Colonic mucosa (tissue), 4 donors: ENCODE measurements at regions of chr3 and their contacts with region 1.

Region 1: GRCh38 chr3:11060500-11061251 is 68.1 kb downstream of the SLC6A1 start:
- DNase-seq: peak; percentile 41
- H3K4me3 ChIP-seq: no peak overlapping the region
- H3K27ac ChIP-seq: no peak overlapping the region
- H3K4me1 ChIP-seq: no peaks in the 10 kb centered on the region
- H3K27me3 ChIP-seq: peaks cover 5% of the 10 kb centered on the region
- CTCF ChIP-seq: peak; percentile 86

Region 2: GRCh38 chr3:10764259-10765051 is 296.2 kb before region 1 on chr3:
- intact Hi-C with region 1: loop called (anchors 5 kb)
- DNase-seq: no peak
- H3K4me3 ChIP-seq: no peak overlapping the region
- H3K27ac ChIP-seq: no peak overlapping the region
- H3K4me1 ChIP-seq: no peaks in the 10 kb centered on the region
- H3K27me3 ChIP-seq: peaks cover 2% of the 10 kb centered on the region
- CTCF ChIP-seq: no peak

Region 3: GRCh38 chr3:10945683-10946287 is 114.9 kb before region 1 on chr3:
- intact Hi-C with region 1: loop called (anchors 2 kb)
- DNase-seq: peak; percentile 40
- H3K4me3 ChIP-seq: no peak overlapping the region
- H3K27ac ChIP-seq: no peak overlapping the region
- H3K4me1 ChIP-seq: no peaks in the 10 kb centered on the region
- H3K27me3 ChIP-seq: no peaks in the 10 kb centered on the region
- CTCF ChIP-seq: peak; percentile 81

Region 4: DNA sequence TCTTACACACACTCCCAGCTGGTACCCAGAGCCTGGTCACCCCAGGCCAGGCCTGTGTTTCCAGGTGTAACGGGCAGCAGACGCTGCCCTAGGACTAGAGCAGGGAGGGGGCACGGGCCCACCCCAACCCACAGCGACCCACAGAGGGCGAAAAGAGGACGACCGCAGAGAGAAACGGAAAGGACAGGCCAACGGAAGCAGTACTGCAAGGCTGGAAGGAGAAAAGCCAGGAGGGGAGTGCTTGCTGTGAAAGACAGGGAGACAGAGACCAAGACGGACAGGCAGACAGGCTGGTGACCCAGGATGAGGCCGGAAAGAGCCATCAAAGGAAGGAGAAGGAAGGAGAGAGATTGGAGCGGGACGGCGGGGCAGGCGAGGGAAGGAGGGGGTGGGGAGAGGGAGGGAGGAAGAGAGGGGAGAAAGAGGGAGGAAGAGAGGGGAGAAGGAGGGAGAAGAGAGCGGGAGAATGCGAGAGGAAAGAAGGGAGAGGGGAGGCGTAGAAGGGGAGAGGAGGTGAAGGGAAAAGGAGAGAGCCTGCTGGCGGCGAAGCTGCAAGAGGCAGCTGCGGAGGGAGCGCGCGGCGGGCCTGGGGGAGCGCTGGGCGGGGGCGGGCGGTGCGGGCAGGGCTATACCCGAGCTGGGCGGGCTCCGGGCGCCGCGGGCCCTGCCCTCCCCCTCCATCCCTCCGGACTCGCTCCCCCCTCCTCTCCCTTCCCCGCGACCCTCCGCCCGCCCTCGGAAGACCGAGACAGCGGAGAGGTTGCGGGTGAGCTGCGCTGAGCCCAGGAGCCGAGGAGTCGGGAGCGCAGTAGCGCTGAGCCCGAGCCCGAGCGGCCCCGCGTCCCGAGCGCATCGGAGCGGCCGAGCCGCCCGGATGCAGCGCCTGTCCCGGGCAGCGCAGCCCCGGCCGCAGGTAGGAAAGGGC is 68.4 kb before region 1 on chr3 and contains the start of gene SLC6A1:
- intact Hi-C with region 1: no loop called
- DNase-seq: no peak
- H3K4me3 ChIP-seq: no peak within 1 kb of the TSS
- H3K27ac ChIP-seq: no peak within 1 kb of the TSS
- H3K4me1 ChIP-seq: no peaks in the 10 kb centered on the region
- H3K27me3 ChIP-seq: peaks cover 24% of the 10 kb centered on the region
- CTCF ChIP-seq: no peak
- total RNA-seq, gene SLC6A1: 0.05 to 0.21 TPM

Region 5: DNA sequence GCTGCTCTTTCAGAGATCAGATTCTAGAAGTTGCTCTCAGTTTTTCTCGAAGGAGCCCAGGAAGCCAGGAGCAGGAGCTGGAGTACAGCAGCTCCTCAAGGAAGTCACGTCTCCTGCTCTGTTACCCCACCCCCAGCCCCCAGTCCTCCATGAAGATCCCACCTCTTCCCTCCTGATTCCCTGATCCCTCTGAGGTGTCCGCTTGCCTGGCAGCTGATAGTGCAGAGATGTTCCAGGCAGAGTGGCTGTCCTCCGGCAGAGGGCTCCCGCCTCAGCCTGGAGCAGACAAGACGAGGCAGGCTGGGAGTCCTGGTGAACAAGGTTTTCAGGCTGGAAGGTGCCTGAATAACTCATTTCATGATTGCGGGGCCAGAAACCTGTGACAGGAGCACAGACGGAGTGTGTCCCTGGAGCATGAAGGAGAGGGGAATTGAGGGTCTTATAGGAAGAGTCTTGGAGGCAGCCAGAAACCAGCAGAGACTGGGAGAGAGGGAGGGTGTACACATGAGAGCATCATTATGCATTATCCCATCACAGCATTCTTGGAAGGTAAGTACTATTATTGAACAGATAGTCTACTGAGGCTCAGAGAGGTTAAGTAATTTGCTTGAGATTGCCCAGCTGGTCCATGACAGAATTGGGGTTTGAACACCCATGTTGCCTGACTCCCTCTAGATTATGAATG is 94.8 kb after region 1 on chr3:
- intact Hi-C with region 1: loop called (anchors 5 kb)
- DNase-seq: peak; percentile 73
- H3K4me3 ChIP-seq: peak overlapping the region; percentile 50
- H3K27ac ChIP-seq: no peak overlapping the region
- H3K4me1 ChIP-seq: peaks cover 7% of the 10 kb centered on the region
- H3K27me3 ChIP-seq: peaks cover 8% of the 10 kb centered on the region
- CTCF ChIP-seq: peak; percentile 60

Region 6: GRCh38 chr3:11335056-11335608 is 274.5 kb after region 1 on chr3:
- intact Hi-C with region 1: loop called (anchors 5 kb)
- DNase-seq: peak; percentile 23
- H3K4me3 ChIP-seq: no peak overlapping the region
- H3K27ac ChIP-seq: no peak overlapping the region
- H3K4me1 ChIP-seq: no peaks in the 10 kb centered on the region
- H3K27me3 ChIP-seq: no peaks in the 10 kb centered on the region
- CTCF ChIP-seq: peak; percentile 50